ENCODE measurements at regions of chr2 and their contacts with region 1.

Region 1: GRCh38 chr2:73233154-73233931 is at the start of gene PRADC1:
- DNase-seq: peak; percentile 97
- ATAC-seq: peak; percentile 85
- H3K4me3 ChIP-seq: peak within 1 kb of the TSS; percentile 89 to 99 (median 94)
- H3K4me3 Mint-ChIP-seq: peak within 1 kb of the TSS; percentile 99
- H3K27ac ChIP-seq: peak within 1 kb of the TSS; percentile 87 to 90
- H3K27ac Mint-ChIP-seq: peak within 1 kb of the TSS; percentile 93
- H3K4me1 ChIP-seq: peaks cover 18 to 20% of the 10 kb centered on the region in 2 donors
- H3K4me1 Mint-ChIP-seq: peaks cover 38% of the 10 kb centered on the region
- H3K27me3 ChIP-seq: no peaks in the 10 kb centered on the region
- H3K27me3 Mint-ChIP-seq: no peaks in the 10 kb centered on the region
- CTCF ChIP-seq: no peak
- total RNA-seq, gene PRADC1: 2.3 and 4.2 TPM in 2 replicates

Region 2: GRCh38 chr2:73077912-73078311 is 155.4 kb before region 1 on chr2:
- CTCF ChIA-PET with region 1: no interaction called
- POLR2A ChIA-PET with region 1: no interaction called
- intact Hi-C with region 1: no loop called
- DNase-seq: no peak
- ATAC-seq: no peak
- H3K4me3 ChIP-seq: no peak overlapping the region
- H3K4me3 Mint-ChIP-seq: no peak overlapping the region
- H3K27ac ChIP-seq: no peak overlapping the region
- H3K27ac Mint-ChIP-seq: no peak overlapping the region
- H3K4me1 ChIP-seq: no peaks in the 10 kb centered on the region
- H3K4me1 Mint-ChIP-seq: no peaks in the 10 kb centered on the region
- H3K27me3 ChIP-seq: peaks cover 0 to 7% (median 0%) of the 10 kb centered on the region in 4 experiments
- H3K27me3 Mint-ChIP-seq: peaks cover 14% of the 10 kb centered on the region
- CTCF ChIP-seq: no peak

Region 3: DNA sequence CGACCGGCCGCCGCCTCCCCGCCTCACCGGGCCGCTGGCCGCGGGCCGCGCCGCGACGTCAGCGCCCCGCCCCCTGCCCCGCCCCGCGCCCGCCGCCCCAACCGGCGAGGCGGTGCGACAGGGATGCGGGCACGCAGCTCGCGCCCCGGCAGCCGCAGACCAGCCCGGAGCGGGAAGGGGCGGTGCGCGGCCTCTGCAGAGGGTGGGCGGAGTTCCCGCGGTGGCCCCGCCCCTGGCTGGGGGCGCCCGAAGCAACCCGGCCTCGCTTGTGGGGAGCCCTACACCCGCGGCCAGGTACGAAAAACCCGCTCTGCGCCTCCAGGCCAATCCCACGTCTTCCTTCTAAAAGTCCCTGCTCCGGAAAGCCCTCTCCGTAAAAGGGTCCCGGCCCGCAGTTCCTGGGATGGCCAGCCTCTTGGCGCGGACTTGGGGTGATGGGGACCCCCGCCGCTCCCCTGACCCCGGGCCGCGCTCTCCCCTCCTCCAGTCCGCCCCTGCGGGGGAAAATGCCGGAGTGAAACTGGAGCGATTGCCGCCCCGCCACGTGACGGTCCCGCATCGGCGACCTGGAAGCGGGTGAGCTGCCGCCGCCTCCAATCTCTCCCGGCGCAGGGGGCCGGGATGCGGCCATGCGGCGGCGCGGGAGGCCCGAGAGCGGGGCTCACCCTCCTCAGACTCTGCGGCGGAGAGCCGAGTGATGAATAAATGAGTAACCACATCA is 120.3 kb before region 1 on chr2 and contains the start of gene RAB11FIP5:
- CTCF ChIA-PET with region 1: no interaction called
- POLR2A ChIA-PET with region 1: no interaction called
- intact Hi-C with region 1: loop called (anchors 5 kb)
- DNase-seq: peak; percentile 83
- ATAC-seq: peak; percentile 91
- H3K4me3 ChIP-seq: peak within 1 kb of the TSS; percentile 15 to 89 (median 74)
- H3K4me3 Mint-ChIP-seq: peak within 1 kb of the TSS; percentile 83
- H3K27ac ChIP-seq: peak within 1 kb of the TSS in 1 of 2 donors; percentile 53
- H3K27ac Mint-ChIP-seq: peak within 1 kb of the TSS; percentile 67
- H3K4me1 ChIP-seq: peaks cover 17% of the 10 kb centered on the region in 2 donors
- H3K4me1 Mint-ChIP-seq: peaks cover 8% of the 10 kb centered on the region
- H3K27me3 ChIP-seq: peaks cover 0 to 23% (median 8%) of the 10 kb centered on the region in 4 experiments
- H3K27me3 Mint-ChIP-seq: peaks cover 3% of the 10 kb centered on the region
- CTCF ChIP-seq: no peak
- total RNA-seq, gene RAB11FIP5: 4.6 and 5.1 TPM in 2 replicates

Region 4: DNA sequence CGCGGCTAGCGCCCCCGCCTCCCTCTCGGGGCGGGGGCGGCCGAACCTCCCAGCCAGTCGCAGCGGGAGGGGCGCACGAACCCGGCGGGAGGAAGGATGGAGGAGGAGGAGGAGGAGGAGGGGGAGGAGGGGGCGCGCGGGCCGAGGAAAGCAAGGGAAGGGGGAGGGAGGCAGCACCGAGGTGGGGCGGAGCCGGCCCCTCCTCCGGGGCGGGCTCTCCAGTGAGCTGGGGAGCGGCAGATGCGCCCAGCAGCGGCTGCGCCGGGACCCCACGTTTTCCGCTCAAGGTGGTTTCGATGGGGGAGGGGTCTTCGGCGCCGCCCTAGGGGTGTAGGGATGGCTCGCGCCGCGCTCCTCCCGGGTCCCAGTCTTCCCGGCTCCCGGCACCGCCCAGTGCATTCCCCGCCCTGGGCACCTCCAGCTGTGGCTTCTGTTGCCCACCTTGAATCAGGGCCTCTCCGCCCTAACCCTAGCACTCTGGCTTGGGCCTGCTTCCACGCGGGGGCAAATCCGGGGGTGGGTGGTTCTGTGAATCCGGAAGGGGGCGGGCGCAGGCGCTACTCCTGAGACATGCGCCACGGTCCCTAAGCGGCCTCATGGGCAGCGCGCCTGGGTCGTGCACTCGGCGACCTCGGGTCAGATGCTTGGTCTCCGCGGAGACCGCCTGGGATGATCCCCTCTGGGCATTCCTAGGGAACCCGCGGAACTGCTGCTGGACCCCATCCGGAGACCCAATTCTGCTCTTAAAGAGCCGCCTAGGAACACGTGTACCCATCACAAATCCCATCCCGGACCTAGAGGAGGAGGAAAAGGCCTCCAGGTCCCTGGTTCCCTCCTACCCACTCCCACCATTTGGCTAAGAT is 51.2 kb after region 1 on chr2 and contains the start of gene FBXO41:
- CTCF ChIA-PET with region 1: interaction called, 18 read pairs
- POLR2A ChIA-PET with region 1: interaction called, 20 read pairs
- intact Hi-C with region 1: loop called (anchors 1 kb)
- DNase-seq: peak; percentile 81
- ATAC-seq: peak; percentile 72
- H3K4me3 ChIP-seq: peak within 1 kb of the TSS; percentile 40 to 81 (median 75)
- H3K4me3 Mint-ChIP-seq: peak within 1 kb of the TSS; percentile 93
- H3K27ac ChIP-seq: peak within 1 kb of the TSS; percentile 80 to 81
- H3K27ac Mint-ChIP-seq: peak within 1 kb of the TSS; percentile 91
- H3K4me1 ChIP-seq: peaks cover 21 to 34% of the 10 kb centered on the region in 2 donors
- H3K4me1 Mint-ChIP-seq: peaks cover 32% of the 10 kb centered on the region
- H3K27me3 ChIP-seq: peaks cover 0 to 6% (median 0%) of the 10 kb centered on the region in 4 experiments
- H3K27me3 Mint-ChIP-seq: peaks cover 2% of the 10 kb centered on the region
- CTCF ChIP-seq: peak; percentile 3
- total RNA-seq, gene FBXO41: 23.7 and 25.2 TPM in 2 replicates

Region 5: GRCh38 chr2:73385595-73386341 is 152.4 kb after region 1 on chr2 and contains the start of gene ALMS1:
- CTCF ChIA-PET with region 1: interaction called, 3 read pairs
- POLR2A ChIA-PET with region 1: interaction called, 10 read pairs
- intact Hi-C with region 1: loop called (anchors 1 kb)
- DNase-seq: peak; percentile 93
- ATAC-seq: peak; percentile 80
- H3K4me3 ChIP-seq: peak within 1 kb of the TSS; percentile 56 to 87 (median 82)
- H3K4me3 Mint-ChIP-seq: peak within 1 kb of the TSS; percentile 90
- H3K27ac ChIP-seq: peak within 1 kb of the TSS; percentile 80 to 82
- H3K27ac Mint-ChIP-seq: peak within 1 kb of the TSS; percentile 93
- H3K4me1 ChIP-seq: peaks cover 18 to 20% of the 10 kb centered on the region in 2 donors
- H3K4me1 Mint-ChIP-seq: peaks cover 23% of the 10 kb centered on the region
- H3K27me3 ChIP-seq: peaks cover 0 to 8% (median 4%) of the 10 kb centered on the region in 4 experiments
- H3K27me3 Mint-ChIP-seq: peaks cover 17% of the 10 kb centered on the region
- CTCF ChIP-seq: no peak
- total RNA-seq, gene ALMS1: 32.1 and 33.1 TPM in 2 replicates

Region 6: DNA sequence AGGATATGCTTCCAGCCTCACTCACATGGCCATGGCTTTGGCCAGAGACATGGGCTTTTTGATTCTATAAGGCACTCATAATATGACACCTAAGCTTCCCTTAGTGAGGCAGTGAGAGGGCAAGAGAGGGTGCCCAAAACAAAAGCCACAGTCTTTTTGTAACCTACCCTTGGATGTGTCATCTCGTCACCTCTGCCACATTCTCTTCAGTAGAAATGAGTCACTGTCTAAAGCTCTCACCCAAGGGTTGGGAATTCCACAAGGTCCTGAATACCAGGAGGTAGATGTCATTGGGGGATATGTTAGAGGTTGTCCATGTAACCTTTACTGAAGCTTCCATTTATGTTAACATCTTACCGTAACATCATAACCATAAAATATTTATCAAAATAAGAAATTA is 260.7 kb after region 1 on chr2:
- CTCF ChIA-PET with region 1: no interaction called
- POLR2A ChIA-PET with region 1: no interaction called
- intact Hi-C with region 1: no loop called
- DNase-seq: no peak
- ATAC-seq: no peak
- H3K4me3 ChIP-seq: no peak overlapping the region
- H3K4me3 Mint-ChIP-seq: no peak overlapping the region
- H3K27ac ChIP-seq: no peak overlapping the region
- H3K27ac Mint-ChIP-seq: no peak overlapping the region
- H3K4me1 ChIP-seq: no peaks in the 10 kb centered on the region
- H3K4me1 Mint-ChIP-seq: no peaks in the 10 kb centered on the region
- H3K27me3 ChIP-seq: no peaks in the 10 kb centered on the region
- H3K27me3 Mint-ChIP-seq: no peaks in the 10 kb centered on the region
- CTCF ChIP-seq: no peak